GM12878 (cell line): ENCODE measurements at regions of chr5 and their contacts with region 1.

Region 1: GRCh38 chr5:74640450-74640953 is at the start of gene ENC1:
- DNase-seq: no peak
- ATAC-seq: peak; percentile 83
- H3K4me3 ChIP-seq: peak within 1 kb of the TSS; percentile 92
- H3K27ac ChIP-seq: peak within 1 kb of the TSS; percentile 55
- H3K4me1 ChIP-seq: peaks cover 9% of the 10 kb centered on the region
- H3K27me3 ChIP-seq: no peaks in the 10 kb centered on the region; a peak in 1 of 4 replicates
- CTCF ChIP-seq: peak; percentile 36 to 54 (median 42); a peak in 5 of 6 replicates
- EP300 ChIP-seq: no peak
- POLR2A ChIP-seq: peak; percentile 97
- RAD21 ChIP-seq: peak; percentile 27; the same call in 1 of the 2 replicates
- polyA plus RNA-seq, gene ENC1: 8.2 to 8.5 TPM

Region 2: DNA sequence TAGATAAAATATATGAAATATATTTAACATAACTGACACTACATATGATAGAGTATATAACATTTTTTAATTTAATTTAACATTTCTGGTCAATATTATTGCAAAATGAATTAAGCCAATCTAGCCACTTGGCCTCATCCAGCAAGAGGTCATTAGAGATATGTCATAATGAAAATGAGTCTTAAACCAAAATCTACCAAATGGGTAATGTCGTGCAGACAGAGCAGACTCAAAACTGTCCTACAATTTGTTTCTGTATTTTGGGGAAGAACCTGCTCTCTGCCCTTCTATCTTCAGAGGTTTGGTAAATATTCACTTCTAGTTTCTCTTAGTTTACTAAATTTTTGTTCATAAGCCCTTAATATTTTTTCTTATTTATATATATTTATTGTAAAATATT is 953.1 kb before region 1 on chr5:
- CTCF ChIA-PET with region 1: no interaction called
- POLR2A ChIA-PET with region 1: no interaction called
- RAD21 ChIA-PET with region 1: no interaction called
- SMC1A ChIA-PET with region 1: no interaction called
- in situ Hi-C with region 1: no loop called
- intact Hi-C with region 1: loop called (anchors 10 kb)
- DNase-seq: no peak
- ATAC-seq: peak; percentile 81
- H3K4me3 ChIP-seq: no peak overlapping the region
- H3K27ac ChIP-seq: no peak overlapping the region
- H3K4me1 ChIP-seq: peaks cover under 1% of the 10 kb centered on the region; the same call in 1 of the 2 replicates
- H3K27me3 ChIP-seq: no peaks in the 10 kb centered on the region
- CTCF ChIP-seq: no peak
- EP300 ChIP-seq: peak; percentile 83
- POLR2A ChIP-seq: no peak
- RAD21 ChIP-seq: no peak

Region 3: DNA sequence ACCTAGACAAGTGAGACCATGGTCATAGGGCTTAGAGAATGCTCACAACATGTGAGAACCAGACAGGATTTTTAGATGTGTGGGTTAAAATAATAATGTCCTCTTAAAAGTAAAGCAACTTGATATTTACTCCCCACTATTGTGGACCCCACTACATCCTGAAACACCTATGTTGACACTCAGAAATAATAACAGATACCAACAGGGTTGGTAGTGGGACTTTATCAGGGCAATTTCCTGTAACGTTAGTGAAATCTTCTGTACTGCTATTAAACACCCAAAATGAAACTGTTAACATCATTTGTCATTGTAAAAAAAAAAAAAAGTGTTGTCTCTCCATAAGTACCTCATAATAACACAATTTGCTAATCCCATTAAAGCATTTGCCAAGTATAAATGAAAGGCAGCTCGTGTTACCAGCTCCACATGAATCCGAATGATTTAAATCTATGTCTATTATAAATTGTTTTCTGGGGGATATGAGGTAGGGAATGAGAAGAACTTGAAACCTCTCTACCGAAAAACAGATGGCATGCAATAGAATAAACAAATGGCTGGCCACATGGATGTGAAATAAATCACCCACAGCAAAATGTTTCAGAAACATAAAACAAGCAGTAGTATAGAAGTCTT is 728.6 kb before region 1 on chr5:
- CTCF ChIA-PET with region 1: interaction called, 7 read pairs
- POLR2A ChIA-PET with region 1: no interaction called
- RAD21 ChIA-PET with region 1: interaction called, 8 read pairs
- SMC1A ChIA-PET with region 1: interaction called, 17 read pairs
- in situ Hi-C with region 1: no loop called
- intact Hi-C with region 1: no loop called
- DNase-seq: no peak
- ATAC-seq: peak; percentile 75
- H3K4me3 ChIP-seq: no peak overlapping the region
- H3K27ac ChIP-seq: no peak overlapping the region
- H3K4me1 ChIP-seq: peaks cover 2% of the 10 kb centered on the region; the same call in 1 of the 2 replicates
- H3K27me3 ChIP-seq: peaks cover 0 to 3% of the 10 kb centered on the region in 2 experiments; a peak in 1 of 4 replicates
- CTCF ChIP-seq: no peak
- EP300 ChIP-seq: no peak
- POLR2A ChIP-seq: no peak
- RAD21 ChIP-seq: no peak

Region 4: DNA sequence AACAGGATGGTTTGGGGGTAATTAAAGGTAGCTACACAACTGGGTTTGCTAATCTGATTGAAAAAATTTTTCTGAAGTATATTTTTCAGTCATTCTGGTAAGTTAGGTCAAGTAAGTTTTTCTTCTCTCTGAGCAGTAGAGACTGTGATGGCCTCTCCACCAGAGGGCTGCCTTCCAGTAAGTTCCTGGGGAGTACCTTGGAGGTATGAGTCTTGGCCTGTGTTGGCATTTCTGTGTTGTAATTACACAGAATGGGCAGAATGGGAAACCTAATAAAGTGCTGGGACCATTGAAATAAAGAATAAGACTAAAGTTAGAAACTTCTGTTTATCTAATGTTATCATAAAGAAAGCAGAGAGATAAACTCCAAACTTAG is 583.7 kb before region 1 on chr5:
- CTCF ChIA-PET with region 1: interaction called, 8 read pairs
- POLR2A ChIA-PET with region 1: no interaction called
- RAD21 ChIA-PET with region 1: interaction called, 11 read pairs
- SMC1A ChIA-PET with region 1: interaction called, 3 read pairs
- in situ Hi-C with region 1: no loop called
- intact Hi-C with region 1: no loop called
- DNase-seq: no peak
- ATAC-seq: peak; percentile 81
- H3K4me3 ChIP-seq: no peak overlapping the region
- H3K27ac ChIP-seq: no peak overlapping the region
- H3K4me1 ChIP-seq: no peaks in the 10 kb centered on the region
- H3K27me3 ChIP-seq: no peaks in the 10 kb centered on the region
- CTCF ChIP-seq: peak; percentile 15 to 36 (median 33); a peak in 4 of 6 replicates
- EP300 ChIP-seq: no peak
- POLR2A ChIP-seq: no peak
- RAD21 ChIP-seq: 0 out of 2 replicates have a peak, but pooled peaks have one; percentile 24

Region 5: GRCh38 chr5:74294231-74294705 is 346.2 kb before region 1 on chr5:
- CTCF ChIA-PET with region 1: interaction called, 3 read pairs
- POLR2A ChIA-PET with region 1: interaction called, 3 read pairs
- RAD21 ChIA-PET with region 1: no interaction called
- SMC1A ChIA-PET with region 1: no interaction called
- in situ Hi-C with region 1: no loop called
- intact Hi-C with region 1: loop called (anchors 10 kb)
- DNase-seq: peak; percentile 82
- ATAC-seq: peak; percentile 85
- H3K4me3 ChIP-seq: no peak overlapping the region
- H3K27ac ChIP-seq: no peak overlapping the region
- H3K4me1 ChIP-seq: peaks cover 13% of the 10 kb centered on the region
- H3K27me3 ChIP-seq: no peaks in the 10 kb centered on the region
- CTCF ChIP-seq: no peak
- EP300 ChIP-seq: 0 out of 4 replicates have a peak, but pooled peaks have one; percentile 18 to 30
- POLR2A ChIP-seq: no peak
- RAD21 ChIP-seq: no peak

Region 6: DNA sequence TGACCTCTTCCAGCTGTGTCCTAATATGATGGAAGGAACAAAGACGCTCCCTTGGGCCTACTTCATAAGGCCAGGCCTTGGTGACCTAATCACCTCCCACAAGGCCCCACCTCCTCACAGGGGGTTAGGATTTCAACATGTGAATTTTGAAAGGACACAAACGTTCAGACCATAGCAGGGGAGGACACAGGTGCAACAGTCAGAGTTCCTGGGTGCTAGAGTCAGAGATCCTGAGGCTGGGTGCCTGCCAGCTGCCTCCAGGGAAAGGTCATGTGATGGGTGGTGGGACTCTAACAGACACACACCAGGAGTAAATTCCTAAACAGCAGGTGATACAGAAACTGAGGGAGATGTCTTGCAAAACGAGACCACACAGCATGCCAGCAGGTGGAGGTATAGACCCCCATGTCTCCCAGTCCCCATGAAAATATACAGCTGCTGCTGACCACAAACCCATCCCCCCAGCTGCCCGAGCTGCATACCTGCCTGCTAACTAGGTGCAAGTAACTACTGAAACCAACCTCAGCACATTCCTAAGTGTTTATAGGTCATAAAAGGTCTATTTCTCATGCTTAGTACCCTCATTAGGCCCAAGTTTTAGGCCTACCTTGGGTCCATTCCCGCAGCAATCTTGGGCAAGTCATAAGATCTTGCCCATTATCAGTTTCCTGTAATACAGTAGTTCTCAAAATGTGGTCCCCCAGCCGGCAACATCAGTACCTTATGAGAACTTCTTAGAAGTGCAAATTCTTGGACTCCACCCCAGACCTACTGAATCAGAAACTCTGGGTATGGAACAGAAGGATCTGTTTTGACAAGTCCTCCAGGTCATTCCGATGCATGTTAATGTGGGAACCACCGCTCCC is 245.4 kb before region 1 on chr5:
- CTCF ChIA-PET with region 1: interaction called, 51 read pairs
- POLR2A ChIA-PET with region 1: interaction called, 3 read pairs
- RAD21 ChIA-PET with region 1: interaction called, 6 read pairs
- SMC1A ChIA-PET with region 1: interaction called, 8 read pairs
- in situ Hi-C with region 1: no loop called
- intact Hi-C with region 1: no loop called
- DNase-seq: no peak
- ATAC-seq: peak; percentile 33
- H3K4me3 ChIP-seq: no peak overlapping the region
- H3K27ac ChIP-seq: no peak overlapping the region
- H3K4me1 ChIP-seq: peaks cover 14% of the 10 kb centered on the region
- H3K27me3 ChIP-seq: no peaks in the 10 kb centered on the region
- CTCF ChIP-seq: peak in 2 of 3 experiments; percentile 24 to 34; a peak in 3 of 6 replicates
- EP300 ChIP-seq: no peak
- POLR2A ChIP-seq: no peak
- RAD21 ChIP-seq: peak; percentile 46

Region 7: GRCh38 chr5:74576941-74577456 is 63.5 kb before region 1 on chr5:
- CTCF ChIA-PET with region 1: interaction called, 4 read pairs
- POLR2A ChIA-PET with region 1: interaction called, 3 read pairs
- RAD21 ChIA-PET with region 1: interaction called, 7 read pairs
- SMC1A ChIA-PET with region 1: interaction called, 11 read pairs
- in situ Hi-C with region 1: no loop called
- intact Hi-C with region 1: loop called (anchors 1 kb)
- DNase-seq: peak; percentile 70
- ATAC-seq: peak; percentile 74
- H3K4me3 ChIP-seq: peak overlapping the region; percentile 29
- H3K27ac ChIP-seq: peak overlapping the region; percentile 86
- H3K4me1 ChIP-seq: peaks cover 35% of the 10 kb centered on the region
- H3K27me3 ChIP-seq: no peaks in the 10 kb centered on the region
- CTCF ChIP-seq: no peak
- EP300 ChIP-seq: peak in 1 of 2 experiments; percentile 79; a peak in 2 of 4 replicates
- POLR2A ChIP-seq: no peak
- RAD21 ChIP-seq: peak; percentile 24; the same call in 1 of the 2 replicates